Calu3 (cell line): ENCODE measurements at regions of chrX and their contacts with region 1.

Region 1: DNA sequence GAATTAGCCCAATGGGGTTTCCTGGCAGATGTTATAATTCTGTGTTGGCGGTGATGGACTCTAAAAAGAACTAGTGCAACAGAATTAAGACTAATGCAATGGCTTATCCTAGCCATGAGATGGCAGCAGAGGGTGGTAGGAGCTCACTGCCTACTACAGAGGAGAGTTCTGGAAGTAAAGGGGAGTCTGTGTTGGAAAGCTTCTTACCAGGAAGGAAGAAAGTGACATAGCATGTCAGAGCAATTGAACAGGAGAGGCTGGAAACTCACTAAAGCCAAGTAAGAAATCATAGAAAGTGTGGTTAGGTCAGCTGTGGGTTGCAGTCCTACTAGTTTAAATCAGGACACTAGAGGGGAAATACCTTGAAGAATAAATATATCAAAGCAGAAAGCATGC is 6.3 kb upstream of the TRPC5OS start:
- DNase-seq: peak; percentile 56
- H3K4me3 Mint-ChIP-seq: no peak overlapping the region
- H3K27ac Mint-ChIP-seq: no peak overlapping the region
- H3K4me1 Mint-ChIP-seq: peaks cover 21% of the 10 kb centered on the region
- H3K27me3 Mint-ChIP-seq: no peaks in the 10 kb centered on the region
- CTCF ChIP-seq: peak; percentile 56

Region 2: GRCh38 chrX:111719426-111720210 is 150.0 kb before region 1 on chrX:
- CTCF ChIA-PET with region 1: no interaction called
- intact Hi-C with region 1: loop called (anchors 10 kb)
- DNase-seq: no peak
- H3K4me3 Mint-ChIP-seq: no peak overlapping the region
- H3K27ac Mint-ChIP-seq: no peak overlapping the region
- H3K4me1 Mint-ChIP-seq: no peaks in the 10 kb centered on the region
- H3K27me3 Mint-ChIP-seq: no peaks in the 10 kb centered on the region
- CTCF ChIP-seq: no peak

Region 3: GRCh38 chrX:111823128-111823527 is 46.5 kb before region 1 on chrX:
- CTCF ChIA-PET with region 1: interaction called, 13 read pairs
- intact Hi-C with region 1: loop called (anchors 1 kb)
- DNase-seq: peak; percentile 56
- H3K4me3 Mint-ChIP-seq: no peak overlapping the region
- H3K27ac Mint-ChIP-seq: no peak overlapping the region
- H3K4me1 Mint-ChIP-seq: peaks cover 18% of the 10 kb centered on the region
- H3K27me3 Mint-ChIP-seq: no peaks in the 10 kb centered on the region
- CTCF ChIP-seq: peak; percentile 64

Region 4: GRCh38 chrX:112043997-112044396 is 174.4 kb after region 1 on chrX:
- CTCF ChIA-PET with region 1: interaction called, 7 read pairs
- intact Hi-C with region 1: loop called (anchors 1 kb)
- DNase-seq: peak; percentile 5
- H3K4me3 Mint-ChIP-seq: no peak overlapping the region
- H3K27ac Mint-ChIP-seq: no peak overlapping the region
- H3K4me1 Mint-ChIP-seq: no peaks in the 10 kb centered on the region
- H3K27me3 Mint-ChIP-seq: no peaks in the 10 kb centered on the region
- CTCF ChIP-seq: no peak

Region 5: GRCh38 chrX:112147206-112147605 is 277.6 kb after region 1 on chrX:
- CTCF ChIA-PET with region 1: no interaction called
- intact Hi-C with region 1: loop called (anchors 5 kb)
- DNase-seq: peak; percentile 6
- H3K4me3 Mint-ChIP-seq: no peak overlapping the region
- H3K27ac Mint-ChIP-seq: no peak overlapping the region
- H3K4me1 Mint-ChIP-seq: no peaks in the 10 kb centered on the region
- H3K27me3 Mint-ChIP-seq: no peaks in the 10 kb centered on the region
- CTCF ChIP-seq: no peak

Region 6: DNA sequence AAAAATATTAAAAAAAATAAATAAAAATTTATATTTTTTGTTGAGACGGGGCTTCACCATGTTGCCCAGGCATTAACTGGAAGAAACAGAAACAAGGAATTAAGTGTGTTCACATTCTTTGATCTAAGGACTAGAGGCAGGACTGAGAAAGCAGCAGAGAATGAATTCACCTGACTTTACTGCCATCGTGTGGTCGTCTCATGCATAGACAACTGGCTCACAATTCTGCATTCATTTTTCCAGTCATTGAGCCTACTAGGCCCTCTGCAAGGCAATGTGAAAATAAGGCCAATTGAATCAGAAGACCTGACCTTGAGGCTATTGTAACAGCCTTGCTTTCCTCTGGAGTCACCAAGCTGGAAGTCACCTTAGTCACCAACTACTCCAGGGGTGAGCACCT is 772.7 kb after region 1 on chrX:
- CTCF ChIA-PET with region 1: interaction called, 5 read pairs
- intact Hi-C with region 1: loop called (anchors 5 kb)
- DNase-seq: peak; percentile 20
- H3K4me3 Mint-ChIP-seq: no peak overlapping the region
- H3K27ac Mint-ChIP-seq: no peak overlapping the region
- H3K4me1 Mint-ChIP-seq: no peaks in the 10 kb centered on the region
- H3K27me3 Mint-ChIP-seq: peaks cover 16% of the 10 kb centered on the region
- CTCF ChIP-seq: peak; percentile 45